Natural killer cell (primary cell): ENCODE measurements at regions of chr12 and their contacts with region 1.

Region 1: DNA sequence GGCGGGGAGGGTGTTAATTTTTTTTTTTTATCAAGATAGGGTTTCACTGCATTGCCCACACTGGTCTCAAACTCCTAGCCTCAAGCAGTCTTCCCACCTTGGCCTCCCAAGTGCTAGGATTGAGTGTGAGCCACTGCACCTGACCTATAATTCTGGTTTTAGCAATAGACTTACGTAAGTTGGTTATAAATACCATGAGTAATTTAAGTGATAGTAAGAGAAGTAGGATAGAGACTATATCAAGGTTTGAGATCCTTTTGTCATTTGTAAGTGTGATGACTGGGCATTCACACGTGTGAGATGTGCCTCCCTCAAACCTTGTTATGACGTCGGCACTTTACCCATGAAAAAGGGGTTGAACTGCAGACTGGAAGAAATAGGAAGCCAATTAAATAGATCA is 22.5 kb downstream of the SINHCAF start:
- DNase-seq: peak in 1 of 2 donors; percentile 17
- ATAC-seq: peak; percentile 84 to 90 (median 90)
- H3K4me3 ChIP-seq: no peak overlapping the region
- H3K4me3 Mint-ChIP-seq: peak overlapping the region; percentile 4
- H3K27ac ChIP-seq: peak overlapping the region; percentile 28
- H3K27ac Mint-ChIP-seq: peak overlapping the region; percentile 78 to 81
- H3K4me1 ChIP-seq: peaks cover 8% of the 10 kb centered on the region
- H3K4me1 Mint-ChIP-seq: peaks cover 46 to 55% of the 10 kb centered on the region in 2 donors
- H3K27me3 ChIP-seq: no peaks in the 10 kb centered on the region
- H3K27me3 Mint-ChIP-seq: no peaks in the 10 kb centered on the region
- CTCF ChIP-seq: no peak

Region 2: DNA sequence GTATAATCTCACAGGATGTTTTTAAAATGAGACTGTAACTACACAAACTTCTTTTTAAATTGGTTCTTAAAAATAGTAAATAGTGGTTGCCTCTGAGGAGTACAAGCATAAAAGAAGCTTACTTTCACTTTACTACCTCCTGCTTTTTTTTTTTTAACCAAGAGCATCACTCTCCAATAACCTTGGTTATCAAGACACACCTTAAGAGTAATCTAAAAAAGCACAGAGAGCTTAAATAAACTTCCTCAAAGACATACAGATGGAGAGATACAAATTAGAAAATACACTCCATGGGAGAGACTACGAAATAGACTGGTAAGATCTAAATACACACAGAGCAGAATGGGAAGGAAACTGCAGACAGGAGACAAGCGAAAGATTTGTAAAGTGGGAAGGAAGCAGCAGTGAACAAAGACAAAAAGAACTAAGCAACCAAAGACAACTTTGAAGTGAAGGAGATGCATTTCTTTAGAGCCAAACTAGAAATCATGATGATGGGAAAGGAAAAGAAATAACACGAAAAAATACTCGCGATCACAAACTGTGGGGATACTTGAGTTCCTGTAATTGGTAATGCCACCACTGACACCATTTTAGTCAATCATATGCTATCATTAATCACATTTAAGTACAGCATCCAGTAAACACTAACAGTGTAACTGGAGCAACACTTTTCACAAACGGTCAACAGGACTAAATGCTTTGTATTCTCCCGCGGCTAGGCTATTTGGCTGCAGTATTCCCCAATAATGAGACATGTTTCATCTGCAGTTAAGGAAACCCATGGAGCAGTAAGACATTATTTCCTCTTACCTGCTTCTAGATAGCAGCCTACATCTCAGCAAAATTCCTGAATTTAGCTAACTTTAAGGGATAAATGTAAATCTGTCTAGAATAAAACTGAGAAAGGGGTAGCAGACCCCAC is 14.3 kb after region 1 on chr12:
- intact Hi-C with region 1: loop called (anchors 1 kb)
- DNase-seq: peak in 1 of 2 donors; percentile 44
- ATAC-seq: peak; percentile 60 to 74 (median 71)
- H3K4me3 ChIP-seq: peak overlapping the region; percentile 23
- H3K4me3 Mint-ChIP-seq: peak overlapping the region; percentile 97
- H3K27ac ChIP-seq: peak overlapping the region; percentile 69
- H3K27ac Mint-ChIP-seq: peak overlapping the region; percentile 87
- H3K4me1 ChIP-seq: peaks cover 4% of the 10 kb centered on the region
- H3K4me1 Mint-ChIP-seq: peaks cover 20 to 42% of the 10 kb centered on the region in 2 donors
- H3K27me3 ChIP-seq: no peaks in the 10 kb centered on the region
- H3K27me3 Mint-ChIP-seq: no peaks in the 10 kb centered on the region
- CTCF ChIP-seq: no peak

Region 3: GRCh38 chr12:31325877-31326631 is 22.6 kb after region 1 on chr12 and contains the start of gene SINHCAF:
- intact Hi-C with region 1: loop called (anchors 1 kb)
- DNase-seq: peak; percentile 96 to 99
- ATAC-seq: peak; percentile 60 to 81 (median 71)
- H3K4me3 ChIP-seq: peak within 1 kb of the TSS; percentile 74
- H3K4me3 Mint-ChIP-seq: peak within 1 kb of the TSS; percentile 99
- H3K27ac ChIP-seq: peak within 1 kb of the TSS; percentile 94
- H3K27ac Mint-ChIP-seq: peak within 1 kb of the TSS; percentile 91 to 96
- H3K4me1 ChIP-seq: peaks cover 9% of the 10 kb centered on the region
- H3K4me1 Mint-ChIP-seq: peaks cover 20 to 27% of the 10 kb centered on the region in 2 donors
- H3K27me3 ChIP-seq: no peaks in the 10 kb centered on the region
- H3K27me3 Mint-ChIP-seq: no peaks in the 10 kb centered on the region
- CTCF ChIP-seq: no peak
- total RNA-seq, gene SINHCAF: 40.4 to 55.0 (median 41.0) TPM

Region 4: DNA sequence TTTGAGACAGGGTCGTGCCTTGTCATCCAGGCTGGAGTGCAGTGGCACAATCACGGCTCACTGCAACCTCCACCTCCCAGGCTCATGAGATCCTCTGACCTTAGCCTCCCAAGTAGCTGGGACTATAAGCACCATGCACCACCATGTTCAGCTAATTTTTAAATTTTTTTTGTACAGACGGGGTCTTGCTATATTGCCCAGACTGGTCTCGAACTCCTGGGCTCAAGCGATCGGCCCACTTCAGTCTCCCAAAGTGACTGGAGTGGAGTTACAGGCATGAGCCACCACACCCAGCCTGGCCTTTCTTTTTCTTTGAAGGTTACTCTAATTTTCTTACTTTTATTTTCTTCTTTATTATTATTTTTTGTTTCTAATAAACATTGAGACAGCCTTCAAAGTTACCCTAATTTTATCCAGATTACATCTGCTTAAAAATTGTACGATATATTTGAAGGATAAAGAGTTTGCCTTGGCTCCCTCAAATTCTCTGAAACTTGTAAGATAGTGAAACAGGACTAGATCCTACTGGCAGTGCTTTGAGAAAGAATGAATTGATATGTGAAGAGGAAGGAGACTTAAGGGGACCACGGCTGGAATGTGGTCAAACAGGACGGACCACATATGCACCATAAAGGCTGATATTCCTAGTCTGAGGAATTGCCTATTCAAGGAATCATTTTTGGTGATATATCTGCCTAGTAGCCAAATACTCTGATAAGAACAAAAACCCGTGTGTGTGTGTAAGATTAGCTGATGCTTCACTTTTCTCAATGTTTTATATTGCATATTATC is 36.6 kb after region 1 on chr12:
- intact Hi-C with region 1: no loop called
- DNase-seq: no peak
- ATAC-seq: no peak
- H3K4me3 ChIP-seq: no peak overlapping the region
- H3K4me3 Mint-ChIP-seq: no peak overlapping the region
- H3K27ac ChIP-seq: no peak overlapping the region
- H3K27ac Mint-ChIP-seq: no peak overlapping the region
- H3K4me1 ChIP-seq: no peaks in the 10 kb centered on the region
- H3K4me1 Mint-ChIP-seq: no peaks in the 10 kb centered on the region
- H3K27me3 ChIP-seq: no peaks in the 10 kb centered on the region
- H3K27me3 Mint-ChIP-seq: no peaks in the 10 kb centered on the region
- CTCF ChIP-seq: no peak